Naive thymus-derived CD4-positive, alpha-beta T cell (primary cell): ENCODE measurements at regions of chr12 and their contacts with region 1.

Region 1: DNA sequence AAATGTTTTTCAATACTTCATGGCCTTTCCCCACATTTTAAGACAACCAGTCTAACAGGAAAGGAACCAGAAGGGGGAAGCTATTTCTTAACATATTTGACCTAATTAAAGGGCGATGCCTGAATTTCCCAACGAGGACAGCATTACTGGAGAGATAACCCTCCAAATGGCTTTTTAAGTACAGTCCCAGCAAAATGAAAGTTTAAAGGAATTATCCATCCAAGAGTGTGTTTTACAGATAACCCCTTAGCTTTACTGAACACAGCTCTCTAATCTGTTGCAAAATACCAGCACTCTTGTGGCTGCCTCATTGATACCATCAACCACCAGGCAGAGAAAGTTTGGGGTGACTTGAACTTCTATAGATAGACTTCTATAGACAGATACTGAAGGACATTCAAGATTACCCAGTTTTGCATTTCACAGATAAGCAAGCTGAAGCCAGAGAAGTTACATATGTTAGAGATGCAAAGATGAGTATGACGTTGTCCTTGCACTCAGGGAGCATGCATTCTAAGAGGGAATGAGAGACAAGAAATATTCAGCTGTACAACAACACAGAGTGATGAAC is 41.3 kb upstream of the DUSP6 start:
- DNase-seq: no peak
- ATAC-seq: peak; percentile 8
- H3K4me3 ChIP-seq: no peak overlapping the region
- H3K4me3 Mint-ChIP-seq: no peak overlapping the region
- H3K27ac ChIP-seq: no peak overlapping the region
- H3K27ac Mint-ChIP-seq: peak overlapping the region in 1 of 9 donors; percentile 24
- H3K4me1 ChIP-seq: peaks cover 8 to 15% of the 10 kb centered on the region in 2 donors
- H3K4me1 Mint-ChIP-seq: peaks cover 21 to 44% (median 38%) of the 10 kb centered on the region in 7 donors
- H3K27me3 ChIP-seq: no peaks in the 10 kb centered on the region
- H3K27me3 Mint-ChIP-seq: no peaks in the 10 kb centered on the region

Region 2: GRCh38 chr12:89427508-89428156 is 34.0 kb after region 1 on chr12:
- CTCF ChIA-PET with region 1: no interaction called
- POLR2A ChIA-PET with region 1: no interaction called
- intact Hi-C with region 1: loop called in 1 of 2 experiments (anchors 1 kb)
- DNase-seq: peak in 1 of 9 donors; percentile 22
- ATAC-seq: peak; percentile 83
- H3K4me3 ChIP-seq: no peak overlapping the region
- H3K4me3 Mint-ChIP-seq: peak overlapping the region in 8 of 10 donors; percentile 0 to 83 (median 17)
- H3K27ac ChIP-seq: no peak overlapping the region
- H3K27ac Mint-ChIP-seq: peak overlapping the region in 5 of 9 donors; percentile 2 to 95 (median 52)
- H3K4me1 ChIP-seq: peaks cover 5 to 29% of the 10 kb centered on the region in 2 donors
- H3K4me1 Mint-ChIP-seq: peaks cover 12 to 48% (median 24%) of the 10 kb centered on the region in 7 donors
- H3K27me3 ChIP-seq: no peaks in the 10 kb centered on the region
- H3K27me3 Mint-ChIP-seq: no peaks in the 10 kb centered on the region